Cardiac septum (tissue), 1 donor: ENCODE measurements at regions of chr2 and their contacts with region 1.

Region 1: DNA sequence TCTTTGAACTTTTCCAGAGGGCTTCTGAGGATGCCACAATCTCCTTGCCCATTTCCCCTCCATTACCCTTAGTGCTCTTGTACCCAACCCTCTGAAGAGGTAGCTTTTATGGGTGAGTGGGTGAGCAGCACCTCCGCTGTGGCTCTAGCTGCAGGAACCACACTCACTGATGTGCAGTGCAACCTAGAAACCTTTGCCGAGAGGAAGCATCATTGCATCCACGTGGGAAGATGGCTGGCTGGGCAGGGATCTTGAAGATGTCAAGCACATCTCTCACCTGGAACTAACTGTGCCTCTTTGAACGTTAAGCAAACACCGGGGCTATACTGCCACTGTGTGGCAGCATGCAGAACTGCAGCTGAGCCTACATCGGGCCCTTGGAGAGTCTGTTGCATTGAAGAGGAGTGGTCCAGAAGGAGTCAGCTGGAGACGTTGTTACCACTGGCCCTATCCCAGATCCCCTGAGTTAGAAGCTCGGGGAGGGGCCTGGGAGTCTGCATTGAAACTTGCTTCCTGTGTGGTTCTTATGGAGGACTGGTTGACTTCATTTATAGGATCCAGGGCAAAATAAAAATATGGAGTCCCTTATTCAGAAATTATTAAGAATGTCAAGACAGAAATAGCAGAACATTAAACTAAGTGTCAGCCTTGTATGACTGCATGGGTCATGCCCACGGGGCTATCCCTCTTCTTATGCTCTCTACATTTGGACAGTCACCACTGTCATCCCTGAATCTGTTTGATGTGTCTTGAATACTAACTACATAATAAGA is 28.7 kb downstream of the IGFBP5 start:
- DNase-seq: peak; percentile 83

Region 2: GRCh38 chr2:216583147-216583546 is 83.5 kb before region 1 on chr2:
- intact Hi-C with region 1: loop called (anchors 5 kb)
- DNase-seq: no peak